Activated CD4-positive, alpha-beta T cell treated with anti-CD3 and anti-CD28 coated beads for 36 hours (primary cell): ENCODE measurements at regions of chr19 and their contacts with region 1.

Region 1: GRCh38 chr19:37551129-37551993 is 43.2 kb downstream of the ZNF571 start:
- DNase-seq: peak; percentile 87
- ATAC-seq: peak; percentile 86
- H3K4me3 Mint-ChIP-seq: peak overlapping the region; percentile 84
- H3K27ac Mint-ChIP-seq: peak overlapping the region; percentile 87
- H3K4me1 Mint-ChIP-seq: peaks cover 3% of the 10 kb centered on the region
- H3K27me3 Mint-ChIP-seq: no peaks in the 10 kb centered on the region

Region 2: GRCh38 chr19:37309834-37310575 is 241.4 kb before region 1 on chr19:
- CTCF ChIA-PET with region 1: no interaction called
- POLR2A ChIA-PET with region 1: no interaction called
- intact Hi-C with region 1: loop called (anchors 10 kb)
- DNase-seq: peak; percentile 56
- ATAC-seq: no peak
- H3K4me3 Mint-ChIP-seq: no peak overlapping the region
- H3K27ac Mint-ChIP-seq: no peak overlapping the region
- H3K4me1 Mint-ChIP-seq: peaks cover 17% of the 10 kb centered on the region
- H3K27me3 Mint-ChIP-seq: no peaks in the 10 kb centered on the region

Region 3: DNA sequence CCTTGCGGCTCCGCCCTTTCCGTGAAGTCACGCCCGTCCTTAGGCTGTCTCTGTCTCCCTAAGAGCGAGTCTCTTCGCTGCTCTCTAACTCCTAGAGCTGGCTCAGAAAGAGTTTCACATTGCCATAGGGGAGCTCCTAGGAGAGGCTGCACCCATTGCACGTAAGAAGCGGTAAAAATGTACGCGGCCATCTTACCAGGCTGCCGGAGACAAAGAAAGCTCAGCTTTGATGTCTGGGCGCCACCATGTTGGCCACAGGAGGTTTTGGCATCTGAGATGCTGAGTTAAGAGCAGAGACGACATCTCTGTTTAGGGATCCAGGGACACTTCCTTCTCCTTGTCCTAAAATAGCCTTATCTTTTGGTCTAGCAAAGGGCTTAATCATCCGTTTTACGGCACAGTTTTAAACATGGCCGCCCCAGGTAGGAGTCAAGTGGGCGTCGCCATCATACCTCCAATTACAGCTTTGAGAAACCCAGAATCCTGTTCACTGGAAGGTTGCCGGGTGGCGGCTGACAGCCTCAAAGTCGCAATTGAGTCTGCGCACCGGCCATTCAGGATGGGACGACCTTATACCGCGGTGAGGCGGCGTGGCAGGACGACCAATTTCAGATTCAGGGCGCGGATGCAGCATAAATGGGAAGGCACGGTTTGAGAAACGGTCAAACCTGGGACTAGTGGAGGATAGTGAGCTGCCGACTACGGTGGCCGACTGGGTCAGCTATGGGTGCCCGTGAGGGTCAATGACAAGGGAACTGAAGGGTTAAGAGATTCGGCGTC is 44.8 kb before region 1 on chr19 and contains the start of gene ZNF793:
- CTCF ChIA-PET with region 1: interaction called, 3 read pairs
- POLR2A ChIA-PET with region 1: interaction called, 3 read pairs
- intact Hi-C with region 1: loop called (anchors 1 to 2 kb)
- DNase-seq: peak; percentile 87
- ATAC-seq: peak; percentile 87
- H3K4me3 Mint-ChIP-seq: no peak within 1 kb of the TSS
- H3K27ac Mint-ChIP-seq: no peak within 1 kb of the TSS
- H3K4me1 Mint-ChIP-seq: no peaks in the 10 kb centered on the region
- H3K27me3 Mint-ChIP-seq: no peaks in the 10 kb centered on the region
- total RNA-seq, gene ZNF793: 4.4 to 4.7 TPM